Esophagus muscularis mucosa (tissue), 4 donors: ENCODE measurements at regions of chr5 and their contacts with region 1.

Region 1: DNA sequence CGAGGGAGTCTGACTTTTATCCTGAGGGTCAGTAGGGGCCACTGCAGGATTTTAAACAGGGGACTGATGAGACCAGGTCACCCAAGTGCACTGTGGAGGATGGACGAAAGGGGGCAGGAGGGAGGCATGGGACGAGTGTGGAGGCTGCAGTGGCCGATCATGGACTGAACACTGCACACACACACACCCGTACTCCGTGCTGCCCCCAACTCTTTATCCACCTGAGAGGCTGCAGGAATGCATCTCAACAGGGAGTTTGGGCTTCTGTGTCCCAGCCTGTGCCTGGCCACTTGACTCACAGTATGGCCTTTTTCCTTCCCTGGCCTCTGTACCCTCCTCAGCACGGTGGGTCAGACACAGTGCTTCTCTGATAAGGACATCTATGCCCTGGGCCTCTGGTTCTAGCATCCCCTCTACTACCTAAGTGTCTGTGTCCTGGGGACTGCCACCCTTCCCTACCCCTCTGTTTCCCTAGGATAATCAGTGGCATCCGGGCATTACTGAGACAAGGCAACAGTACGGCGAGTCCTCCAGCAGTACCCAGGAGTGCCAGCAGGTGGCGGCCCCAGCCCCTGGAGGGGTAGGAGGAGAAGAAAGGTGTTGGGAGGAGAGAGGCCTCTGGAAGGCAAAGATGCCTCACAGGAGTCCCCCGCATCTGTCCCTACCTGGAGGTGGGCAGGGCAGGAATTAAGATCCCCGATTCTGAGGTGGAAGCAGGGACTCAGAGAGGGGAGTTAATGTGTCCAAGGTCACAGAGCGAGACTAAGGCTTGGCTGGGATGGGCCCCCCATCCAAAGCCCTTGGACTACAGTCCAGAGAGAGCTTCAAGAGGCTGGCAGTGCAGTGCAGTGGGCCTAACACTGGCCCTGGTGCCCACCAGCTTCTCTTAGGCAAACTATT is 5.1 kb upstream of the CDX1 start:
- DNase-seq: peak; percentile 97
- H3K4me3 ChIP-seq: no peak overlapping the region
- H3K27ac ChIP-seq: peak overlapping the region; percentile 85 to 90 (median 88)
- H3K4me1 ChIP-seq: peaks cover 42 to 66% (median 61%) of the 10 kb centered on the region in 4 donors
- H3K27me3 ChIP-seq: peaks cover 0 to 4% (median 0%) of the 10 kb centered on the region in 4 donors
- CTCF ChIP-seq: peak; percentile 85 to 93 (median 92)
- EP300 ChIP-seq: no peak
- POLR2A ChIP-seq: no peak

Region 2: GRCh38 chr5:150081541-150082283 is 79.8 kb before region 1 on chr5:
- intact Hi-C with region 1: no loop called
- DNase-seq: peak; percentile 92
- H3K4me3 ChIP-seq: no peak overlapping the region
- H3K27ac ChIP-seq: no peak overlapping the region
- H3K4me1 ChIP-seq: peaks cover 0 to 5% (median 2%) of the 10 kb centered on the region in 4 donors
- H3K27me3 ChIP-seq: no peaks in the 10 kb centered on the region
- CTCF ChIP-seq: no peak
- EP300 ChIP-seq: no peak
- POLR2A ChIP-seq: no peak

Region 3: DNA sequence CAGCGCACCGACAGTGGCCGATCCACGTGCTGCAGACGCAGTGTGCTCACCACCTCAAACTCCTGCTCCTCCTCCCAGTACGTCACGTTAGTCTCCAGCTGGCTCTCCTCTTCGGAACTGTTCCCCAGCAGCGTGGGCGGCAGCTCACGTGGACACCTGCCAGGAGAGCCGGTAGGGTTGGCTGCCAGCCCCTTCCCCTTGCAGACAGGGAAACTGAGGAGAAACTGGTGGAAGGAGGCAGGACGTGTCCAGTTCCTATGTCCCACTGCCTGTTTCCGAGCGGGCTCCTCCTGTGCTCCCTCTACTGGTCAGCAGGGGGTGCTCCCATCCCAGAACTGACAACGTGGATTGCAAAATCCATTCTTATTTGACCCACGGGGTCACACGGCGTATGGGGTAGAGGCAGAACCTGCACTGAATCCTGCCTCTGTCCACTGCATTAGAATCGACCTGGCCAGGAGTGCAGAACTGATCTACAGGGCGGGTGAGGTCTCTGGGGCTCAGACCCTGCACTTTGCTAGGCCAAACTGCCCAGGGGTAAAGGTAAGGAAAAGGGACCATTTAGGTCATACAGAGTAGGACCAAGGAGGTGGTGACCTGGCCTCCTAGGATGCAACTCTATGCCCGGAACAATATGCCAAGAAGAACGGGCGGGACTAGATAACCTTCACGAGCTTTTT is 31.5 kb before region 1 on chr5:
- intact Hi-C with region 1: loop called (anchors 2 kb)
- DNase-seq: peak; percentile 95
- H3K4me3 ChIP-seq: peak overlapping the region in 1 of 4 donors; percentile 33
- H3K27ac ChIP-seq: peak overlapping the region; percentile 16 to 30 (median 26)
- H3K4me1 ChIP-seq: peaks cover 27 to 62% (median 44%) of the 10 kb centered on the region in 4 donors
- H3K27me3 ChIP-seq: no peaks in the 10 kb centered on the region
- CTCF ChIP-seq: peak; percentile 95 to 97 (median 97)
- EP300 ChIP-seq: no peak
- POLR2A ChIP-seq: no peak

Region 4: DNA sequence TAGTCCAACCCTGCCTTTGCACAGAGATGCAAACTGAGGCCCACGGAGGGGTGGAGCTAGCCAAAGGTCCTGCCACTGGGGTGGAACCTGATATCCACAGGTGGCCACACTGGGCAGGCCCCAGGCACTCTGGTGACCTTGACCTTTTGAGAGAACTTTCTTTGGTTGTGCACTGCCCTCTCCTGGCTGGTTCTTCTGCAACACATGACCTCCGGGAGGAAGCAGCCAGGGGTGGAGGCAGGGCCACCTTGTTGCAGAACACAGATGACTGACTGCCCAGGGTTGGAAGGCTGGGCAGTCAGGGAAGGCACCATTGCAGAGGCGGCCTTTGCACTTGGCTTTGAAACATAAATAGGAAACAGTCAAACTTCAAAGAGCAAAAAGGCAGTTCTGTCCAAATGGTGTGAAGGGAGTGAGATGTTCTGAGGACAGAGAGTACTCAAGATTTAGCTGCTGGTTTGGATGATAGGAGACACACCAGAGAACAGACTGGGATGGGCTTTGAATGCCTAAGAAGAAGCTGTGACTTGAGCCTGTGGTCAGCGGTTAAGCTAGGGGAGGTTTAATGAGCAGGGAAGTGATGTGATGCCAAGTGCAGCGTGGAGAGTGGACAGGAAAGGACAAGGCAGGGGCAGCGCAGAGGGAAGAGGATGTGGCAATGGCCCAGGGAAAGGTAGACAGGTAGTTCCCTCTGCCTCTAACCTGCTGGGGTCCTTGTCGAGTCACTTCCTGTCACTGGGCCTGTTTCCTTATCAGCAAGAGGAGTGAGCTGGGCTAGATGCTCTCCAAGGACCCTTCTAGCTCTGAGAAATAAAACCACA is 189.2 kb after region 1 on chr5:
- intact Hi-C with region 1: loop called (anchors 5 kb)
- DNase-seq: peak; percentile 94
- H3K4me3 ChIP-seq: no peak overlapping the region
- H3K27ac ChIP-seq: peak overlapping the region in 2 of 4 donors; percentile 14 to 25
- H3K4me1 ChIP-seq: peaks cover 0 to 14% (median 10%) of the 10 kb centered on the region in 4 donors
- H3K27me3 ChIP-seq: no peaks in the 10 kb centered on the region
- CTCF ChIP-seq: peak; percentile 54 to 69 (median 60)
- EP300 ChIP-seq: no peak
- POLR2A ChIP-seq: no peak

Region 5: DNA sequence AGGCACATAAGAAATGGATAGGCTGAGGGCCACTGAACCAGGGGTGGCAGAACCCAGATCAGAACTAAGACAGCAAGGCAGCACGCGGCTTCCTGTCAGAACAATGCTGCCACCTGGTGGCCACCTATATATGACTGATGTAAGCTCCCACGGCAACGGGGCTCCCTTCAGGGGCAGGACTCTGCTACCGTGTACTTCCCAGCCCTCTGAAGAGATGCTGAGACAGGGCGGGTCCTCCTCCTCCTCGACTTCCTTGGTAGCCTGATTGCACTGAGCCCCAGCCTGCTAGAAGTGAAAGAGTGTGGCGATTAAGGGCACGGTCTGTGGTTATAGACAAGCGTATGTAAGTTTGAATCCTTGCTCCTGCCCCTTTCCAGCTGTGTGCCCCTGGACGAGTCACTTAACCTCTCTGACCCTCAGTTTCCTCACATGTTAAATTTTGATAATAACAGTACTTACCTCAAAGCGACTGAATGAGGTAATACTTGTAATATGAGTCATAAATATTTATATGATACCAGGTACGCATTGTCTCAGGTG is 274.7 kb after region 1 on chr5:
- intact Hi-C with region 1: loop called (anchors 5 kb)
- DNase-seq: peak; percentile 98
- H3K4me3 ChIP-seq: no peak overlapping the region
- H3K27ac ChIP-seq: no peak overlapping the region
- H3K4me1 ChIP-seq: peaks cover 2 to 8% (median 7%) of the 10 kb centered on the region in 4 donors
- H3K27me3 ChIP-seq: no peaks in the 10 kb centered on the region
- CTCF ChIP-seq: peak; percentile 80 to 88 (median 82)
- EP300 ChIP-seq: no peak
- POLR2A ChIP-seq: no peak

Region 6: DNA sequence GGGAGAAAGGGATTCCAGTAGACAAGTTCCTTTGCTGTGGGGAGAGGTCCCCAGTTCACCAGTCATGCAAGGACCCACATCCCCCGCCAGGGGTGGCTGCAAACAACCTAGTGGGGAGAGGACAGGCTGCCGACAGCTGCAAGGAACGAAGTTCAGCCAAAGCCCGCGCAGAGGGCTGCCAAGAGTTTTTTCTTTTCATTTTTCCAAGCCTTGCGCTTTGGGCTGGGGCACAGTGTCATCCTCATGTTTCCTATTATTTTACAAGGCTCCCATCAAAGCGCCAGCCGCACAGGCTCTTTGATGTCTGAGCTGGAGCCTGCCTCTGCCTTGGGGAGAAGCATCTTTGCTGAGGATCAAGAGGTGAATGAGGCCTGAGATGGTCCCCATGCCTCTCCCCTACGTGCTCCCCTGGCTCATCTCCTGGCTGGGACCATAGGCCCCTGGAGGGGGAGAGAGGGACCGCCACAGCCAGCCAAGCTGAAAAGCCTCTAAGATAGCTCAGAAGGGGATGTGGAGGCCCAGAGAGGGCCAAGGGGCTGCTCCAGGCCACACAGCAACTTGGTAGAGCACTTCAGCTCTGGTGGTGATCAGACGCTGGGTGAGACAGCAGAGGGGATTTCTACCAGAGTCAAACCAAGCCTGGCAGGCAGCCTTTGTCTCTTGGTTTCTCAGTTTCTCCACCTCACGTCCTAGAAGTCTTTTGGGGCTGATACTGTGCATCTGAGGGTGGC is 428.5 kb after region 1 on chr5:
- intact Hi-C with region 1: no loop called
- DNase-seq: no peak
- H3K4me3 ChIP-seq: no peak overlapping the region
- H3K27ac ChIP-seq: peak overlapping the region; percentile 51 to 64 (median 56)
- H3K4me1 ChIP-seq: peaks cover 34 to 47% (median 45%) of the 10 kb centered on the region in 4 donors
- H3K27me3 ChIP-seq: no peaks in the 10 kb centered on the region
- CTCF ChIP-seq: peak; percentile 77 to 79 (median 79)
- EP300 ChIP-seq: no peak
- POLR2A ChIP-seq: no peak